Posterior vena cava (tissue), 2 donors: ENCODE measurements at regions of chr1 and their contacts with region 1.

Region 1: GRCh38 chr1:151198255-151199127 is at the start of gene PIP5K1A:
- DNase-seq: peak; percentile 100
- total RNA-seq, gene PIP5K1A: 39.1 to 41.9 TPM

Region 2: GRCh38 chr1:151146412-151147140 is 51.9 kb before region 1 on chr1 and contains the start of gene SEMA6C:
- intact Hi-C with region 1: no loop called
- DNase-seq: peak; percentile 98
- total RNA-seq, gene SEMA6C: 6.9 to 10.1 TPM

Region 3: DNA sequence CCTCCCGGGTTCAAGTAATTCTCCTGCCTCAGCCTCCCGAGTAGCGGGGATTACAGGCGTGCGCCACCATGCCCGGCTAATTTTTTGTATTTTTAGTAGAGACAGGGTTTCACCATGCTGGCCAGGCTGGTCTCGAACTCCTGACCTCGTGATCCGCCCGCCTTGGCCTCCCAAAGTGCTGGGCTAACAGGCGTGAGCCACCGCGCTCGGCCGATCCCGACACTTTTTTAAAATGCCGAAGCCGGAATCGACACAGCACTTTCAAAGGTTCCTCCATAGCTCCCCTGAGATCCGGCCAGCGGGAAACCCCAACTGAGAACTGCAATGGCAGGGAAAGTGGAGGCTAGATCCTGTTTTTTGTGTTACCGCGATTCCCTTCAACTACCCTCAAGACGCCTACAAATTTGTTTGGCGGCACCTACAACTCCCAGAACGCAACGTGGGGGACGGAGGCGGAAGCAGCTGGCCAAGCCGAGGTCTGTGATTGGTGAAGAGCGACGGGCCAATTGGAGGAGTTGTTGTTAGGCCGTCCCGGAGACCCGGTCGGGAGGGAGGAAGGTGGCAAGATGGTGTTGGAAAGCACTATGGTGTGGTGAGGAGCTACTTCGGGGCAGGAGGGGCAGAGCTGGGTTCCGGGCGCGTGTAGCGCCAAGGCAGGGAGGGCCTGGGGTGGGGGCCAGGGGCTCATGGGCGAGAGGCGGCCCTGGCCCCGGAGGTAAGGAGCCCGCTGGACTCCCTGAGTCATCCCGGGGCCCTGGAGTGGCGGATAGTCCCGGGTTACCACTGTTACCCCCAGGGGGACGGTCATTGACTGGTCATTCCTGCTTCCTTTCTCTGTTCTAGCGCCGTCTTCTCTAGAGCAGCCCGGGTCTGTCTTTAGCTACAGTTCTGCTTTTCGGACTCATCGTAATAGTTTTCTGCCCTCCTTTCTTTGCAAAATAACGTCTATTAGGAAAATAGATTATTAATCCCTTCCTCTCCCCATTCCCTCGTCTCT is 56.0 kb after region 1 on chr1 and contains the start of gene PSMD4:
- intact Hi-C with region 1: loop called (anchors 5 kb)
- DNase-seq: peak; percentile 98
- total RNA-seq, gene PSMD4: 131 to 139 TPM